ENCODE measurements at regions of chr7 and their contacts with region 1.

Region 1: DNA sequence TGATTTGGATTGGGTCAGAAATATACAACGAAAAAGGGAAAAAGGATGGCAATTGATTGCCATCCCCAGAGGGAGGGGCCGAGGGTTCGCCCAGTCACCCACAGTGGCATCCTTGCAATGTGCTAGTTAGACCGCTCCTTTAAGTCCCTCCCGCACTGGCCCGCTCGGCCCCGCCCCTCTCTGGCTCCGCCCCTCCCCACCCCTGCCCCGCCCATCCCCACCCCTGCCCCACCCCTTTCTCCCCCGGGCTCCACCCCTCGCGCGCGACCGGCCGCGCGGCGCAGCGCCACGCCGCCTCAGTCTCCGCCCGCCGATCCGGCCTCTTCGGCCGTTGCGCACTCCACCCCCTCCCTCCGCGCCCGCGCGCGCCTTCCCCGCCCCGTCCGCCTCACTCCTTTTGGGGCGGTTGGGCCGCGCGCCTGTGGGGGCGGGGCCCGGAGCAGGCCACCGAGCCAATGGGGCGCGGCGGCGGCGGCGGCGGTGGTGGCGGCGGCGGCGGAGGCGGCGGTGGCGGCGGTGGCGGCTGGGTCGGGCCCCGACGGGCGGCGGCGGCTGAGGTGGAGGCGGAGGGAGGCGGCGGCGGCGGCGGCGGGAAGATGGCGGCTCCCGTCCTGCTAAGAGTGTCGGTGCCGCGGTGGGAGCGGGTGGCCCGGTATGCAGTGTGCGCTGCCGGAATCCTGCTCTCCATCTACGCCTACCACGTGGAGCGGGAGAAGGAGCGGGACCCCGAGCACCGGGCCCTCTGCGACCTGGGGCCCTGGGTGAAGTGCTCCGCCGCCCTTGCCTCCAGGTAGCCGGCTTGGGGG is at the start of gene VKORC1L1:
- DNase-seq: peak; percentile 91
- H3K4me3 ChIP-seq: peak within 1 kb of the TSS; percentile 50 to 87 (median 53)
- H3K27ac ChIP-seq: peak within 1 kb of the TSS; percentile 48
- H3K4me1 ChIP-seq: no peaks in the 10 kb centered on the region
- H3K27me3 ChIP-seq: no peaks in the 10 kb centered on the region
- CTCF ChIP-seq: no peak
- POLR2A ChIP-seq: no peak
- total RNA-seq, gene VKORC1L1: 36.6 and 36.7 TPM in 2 replicates

Region 2: DNA sequence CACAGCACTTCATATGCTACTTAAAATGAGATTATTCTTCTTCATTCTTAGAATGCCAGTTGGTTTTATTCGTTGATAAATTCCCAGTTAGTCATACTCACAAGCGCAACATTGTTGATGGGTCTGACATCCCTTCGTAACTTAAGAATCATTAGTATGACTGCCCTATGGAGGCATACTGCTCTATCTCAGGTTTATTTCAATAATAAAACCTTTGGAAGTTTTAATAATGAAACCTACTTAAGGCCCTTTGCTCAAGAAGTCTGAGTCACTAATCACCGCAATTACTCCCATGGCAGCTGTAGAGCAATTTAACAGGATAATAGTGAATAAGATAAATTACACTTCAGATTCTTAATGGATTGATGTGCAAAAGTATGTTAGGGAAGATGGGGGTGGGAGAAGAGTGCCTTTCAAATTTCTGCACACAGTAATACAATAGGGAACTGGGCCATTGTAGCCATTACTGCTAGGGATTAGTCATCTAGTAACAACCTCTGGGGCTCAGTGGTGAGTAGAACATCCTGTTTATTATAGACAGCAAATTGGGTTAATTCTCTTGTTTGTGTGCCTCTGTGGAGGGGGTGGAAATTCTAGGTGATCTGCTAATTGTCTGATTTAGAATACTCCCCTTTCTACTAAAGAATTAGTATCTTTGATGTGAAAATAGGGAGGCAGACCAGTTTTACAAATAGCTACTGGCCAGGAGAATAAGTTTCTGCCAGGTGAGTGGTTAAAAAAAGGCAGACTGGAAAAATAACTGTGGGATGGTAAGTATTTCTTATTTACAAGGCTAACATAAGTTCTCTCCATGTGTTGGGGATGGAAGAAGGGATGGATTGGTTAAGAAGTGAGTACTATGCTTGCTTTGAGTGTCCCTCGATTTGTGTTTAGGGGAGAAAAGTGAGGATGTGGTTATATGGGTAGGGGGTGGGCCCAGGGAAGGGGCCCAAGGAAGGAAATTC is 74.6 kb before region 1 on chr7:
- CTCF ChIA-PET with region 1: no interaction called
- POLR2A ChIA-PET with region 1: no interaction called
- dilution Hi-C with region 1: no loop called
- intact Hi-C with region 1: loop called (anchors 10 kb)
- DNase-seq: peak; percentile 87
- H3K4me3 ChIP-seq: no peak overlapping the region
- H3K27ac ChIP-seq: peak overlapping the region; percentile 85
- H3K4me1 ChIP-seq: peaks cover 50% of the 10 kb centered on the region
- H3K27me3 ChIP-seq: no peaks in the 10 kb centered on the region
- CTCF ChIP-seq: no peak
- POLR2A ChIP-seq: no peak

Region 3: GRCh38 chr7:65938336-65938895 is 65.4 kb after region 1 on chr7:
- CTCF ChIA-PET with region 1: no interaction called
- POLR2A ChIA-PET with region 1: no interaction called
- dilution Hi-C with region 1: no loop called
- intact Hi-C with region 1: loop called (anchors 10 kb)
- DNase-seq: no peak
- H3K4me3 ChIP-seq: no peak overlapping the region
- H3K27ac ChIP-seq: no peak overlapping the region
- H3K4me1 ChIP-seq: no peaks in the 10 kb centered on the region
- H3K27me3 ChIP-seq: no peaks in the 10 kb centered on the region
- CTCF ChIP-seq: no peak
- POLR2A ChIP-seq: no peak

Measured in endothelial cell of umbilical vein (primary cell).